Mucosa of descending colon (tissue), 3 donors: ENCODE measurements at regions of chr11 and their contacts with region 1.

Region 1: GRCh38 chr11:19561011-19561410 is 151.6 kb upstream of the NAV2 start:
- DNase-seq: no peak
- ATAC-seq: no peak
- H3K4me3 ChIP-seq: no peak overlapping the region
- H3K4me1 ChIP-seq: no peaks in the 10 kb centered on the region
- CTCF ChIP-seq: no peak

Region 2: DNA sequence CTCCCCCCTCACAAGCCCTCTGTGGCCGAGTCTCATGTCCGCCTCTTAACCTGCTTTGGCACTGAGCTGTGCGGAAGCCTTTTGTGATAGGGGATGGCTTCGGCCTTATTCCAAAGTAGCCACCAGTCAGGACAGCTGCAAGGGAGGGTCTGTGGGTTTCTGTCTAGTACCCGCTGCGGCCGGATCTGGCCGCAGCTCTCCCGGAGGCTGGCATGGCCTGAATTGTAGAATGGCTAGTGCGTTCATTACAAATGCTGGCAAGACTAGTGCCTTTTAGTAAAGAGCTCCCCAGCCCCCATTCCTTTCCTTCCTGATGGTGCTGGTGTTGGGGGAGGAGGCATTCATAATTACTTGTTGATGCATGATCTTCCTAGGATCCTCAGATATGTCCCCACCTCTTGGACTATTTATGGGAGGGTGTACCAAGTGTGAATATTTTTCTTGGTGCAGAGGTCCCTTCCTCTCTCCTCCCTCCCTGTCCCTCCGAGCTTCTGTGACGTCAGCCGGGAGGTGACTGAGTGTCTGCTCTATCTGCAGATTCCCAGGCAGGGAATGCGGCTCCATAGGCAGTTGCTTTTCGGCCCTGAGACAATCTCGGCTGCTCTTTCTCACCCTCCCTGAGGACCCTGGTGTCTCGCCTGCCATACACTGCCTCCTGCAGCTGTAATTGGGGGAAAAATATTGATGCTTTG is 211.5 kb before region 1 on chr11:
- intact Hi-C with region 1: no loop called
- DNase-seq: no peak
- ATAC-seq: no peak
- H3K4me3 ChIP-seq: no peak overlapping the region
- H3K4me1 ChIP-seq: no peaks in the 10 kb centered on the region
- CTCF ChIP-seq: no peak

Region 3: DNA sequence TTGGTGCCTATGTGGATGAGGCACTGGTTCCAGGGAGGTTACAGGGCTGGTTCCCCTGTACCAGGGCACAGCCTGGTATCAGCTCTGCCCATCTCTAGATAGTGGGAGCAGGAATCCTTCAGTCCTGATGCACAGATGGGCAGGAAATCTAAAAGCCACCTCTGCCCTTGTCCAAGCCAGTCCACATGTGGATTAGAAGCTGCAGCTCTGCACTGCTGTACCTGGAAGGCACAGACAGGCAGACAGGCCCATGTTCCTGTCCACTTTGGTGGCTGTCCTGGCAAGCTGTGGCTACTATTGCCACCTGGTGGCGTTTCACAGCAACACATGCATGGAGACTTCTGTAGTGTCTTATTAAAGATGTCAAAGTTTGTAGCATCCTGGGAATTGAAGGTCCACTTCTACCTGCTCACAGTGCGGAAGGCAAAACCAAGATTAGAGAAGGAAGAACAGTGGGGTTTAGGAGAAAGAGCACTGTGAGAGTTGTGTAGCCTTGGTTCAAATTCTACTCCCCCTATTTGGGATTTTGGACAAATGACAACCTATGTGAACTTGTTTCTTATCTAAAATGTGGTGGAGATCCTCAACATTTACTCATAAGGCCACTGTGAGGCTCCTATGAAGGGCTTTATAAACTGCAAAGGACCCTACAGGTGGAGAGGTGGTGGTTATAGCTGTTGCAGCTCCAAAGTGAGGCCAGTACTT is 181.7 kb after region 1 on chr11:
- intact Hi-C with region 1: loop called (anchors 1 to 5 kb)
- DNase-seq: peak; percentile 61 to 87 (median 83)
- ATAC-seq: peak; percentile 94
- H3K4me3 ChIP-seq: no peak overlapping the region
- H3K4me1 ChIP-seq: no peaks in the 10 kb centered on the region
- CTCF ChIP-seq: peak; percentile 83

Region 4: DNA sequence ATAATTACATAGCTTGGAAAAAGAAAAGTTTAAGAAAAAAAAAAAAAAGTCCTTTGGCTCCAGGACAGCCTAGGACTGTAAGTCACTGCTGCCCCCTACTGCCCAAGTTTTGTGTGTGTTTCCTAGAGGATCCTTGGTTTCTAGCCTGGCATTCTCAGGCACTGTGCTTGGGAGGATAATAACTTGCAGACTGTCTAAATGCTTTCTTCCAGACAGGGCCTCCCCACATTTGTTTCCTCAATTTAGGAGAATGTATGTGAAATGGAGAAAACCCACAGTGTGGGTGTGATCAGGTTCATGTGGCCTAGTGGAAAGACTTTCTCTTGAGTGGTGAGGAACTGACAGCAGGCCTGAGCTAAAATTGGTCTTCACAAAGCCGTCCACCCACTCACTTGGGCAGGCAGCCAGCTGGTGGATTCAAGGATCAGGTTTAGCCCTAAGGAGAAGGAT is 342.6 kb after region 1 on chr11:
- intact Hi-C with region 1: loop called (anchors 5 to 10 kb)
- DNase-seq: peak in 2 of 3 donors; percentile 65 to 95
- ATAC-seq: peak; percentile 86
- H3K4me3 ChIP-seq: no peak overlapping the region
- H3K4me1 ChIP-seq: no peaks in the 10 kb centered on the region
- CTCF ChIP-seq: peak; percentile 50